ENCODE measurements at regions of chr12 and their contacts with region 1.

Region 1: DNA sequence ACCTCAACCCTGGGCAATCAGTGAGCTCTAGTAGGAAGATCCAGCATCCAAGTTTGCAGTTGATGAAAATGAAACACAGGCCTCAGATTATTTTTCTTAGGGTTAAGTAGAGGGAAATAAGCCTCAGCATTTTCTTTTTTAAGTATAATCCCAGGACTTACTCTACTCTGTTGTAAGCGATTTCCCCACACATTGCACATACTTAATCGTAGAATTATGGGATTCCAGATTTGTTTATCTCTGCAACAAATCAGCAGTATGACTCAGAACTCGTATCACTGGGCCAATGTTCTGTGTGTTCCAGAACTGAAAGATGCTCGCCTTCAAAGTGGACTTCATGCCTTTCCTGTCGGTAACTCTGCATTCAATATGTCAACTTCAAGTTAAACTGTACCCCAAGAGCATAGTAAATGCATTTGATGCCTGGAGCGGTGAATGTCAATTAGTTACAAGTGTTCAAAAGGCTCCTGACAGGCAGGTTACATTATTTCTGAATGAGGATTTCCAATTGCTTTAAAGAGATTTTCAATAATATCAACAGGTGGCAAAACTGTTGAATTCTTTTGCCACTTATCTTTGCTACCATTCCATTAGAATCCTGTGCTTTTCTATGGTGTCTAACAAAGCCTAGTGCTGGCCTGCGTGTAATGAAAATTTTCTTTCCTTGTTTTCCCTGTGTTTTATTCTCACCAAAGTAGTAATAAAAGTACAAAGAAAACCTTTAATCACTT is 323.8 kb upstream of the SYT1 start:
- DNase-seq: no peak
- H3K4me3 ChIP-seq: no peak overlapping the region
- H3K27ac ChIP-seq: no peak overlapping the region
- H3K4me1 ChIP-seq: no peaks in the 10 kb centered on the region
- H3K27me3 ChIP-seq: no peaks in the 10 kb centered on the region
- CTCF ChIP-seq: no peak

Region 2: DNA sequence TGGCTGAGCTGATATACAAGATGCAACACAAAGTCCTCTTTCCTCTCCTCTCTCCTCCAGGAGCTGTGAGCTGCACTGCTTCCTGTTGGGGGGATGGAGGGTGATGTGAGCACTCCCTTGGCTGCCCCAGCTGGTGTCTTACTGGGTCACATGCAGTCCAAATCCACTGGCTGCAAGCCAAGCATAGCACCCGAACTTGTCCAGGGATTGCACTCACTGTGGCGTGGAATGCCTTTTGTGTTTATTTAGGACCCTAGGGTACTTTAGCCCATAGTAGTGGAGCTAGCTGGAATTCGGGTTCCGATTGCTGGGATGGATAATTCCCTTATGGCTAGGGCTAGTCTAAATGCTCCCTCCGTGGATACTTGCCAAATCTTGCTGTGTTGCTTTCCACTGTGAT is 101.1 kb before region 1 on chr12:
- intact Hi-C with region 1: loop called (anchors 5 kb)
- DNase-seq: peak in 1 of 2 donors; percentile 62
- H3K4me3 ChIP-seq: no peak overlapping the region
- H3K27ac ChIP-seq: no peak overlapping the region
- H3K4me1 ChIP-seq: no peaks in the 10 kb centered on the region
- H3K27me3 ChIP-seq: no peaks in the 10 kb centered on the region
- CTCF ChIP-seq: no peak

Measured in tibial artery (tissue), 4 donors.